ENCODE measurements at regions of chr18 and their contacts with region 1.

Region 1: GRCh38 chr18:24103320-24104021 is 35.4 kb upstream of the CABYR start:
- DNase-seq: no peak
- H3K4me3 ChIP-seq: no peak overlapping the region
- H3K27ac ChIP-seq: no peak overlapping the region
- H3K4me1 ChIP-seq: no peaks in the 10 kb centered on the region
- H3K27me3 ChIP-seq: no peaks in the 10 kb centered on the region
- CTCF ChIP-seq: no peak

Region 2: GRCh38 chr18:24031916-24032315 is 71.6 kb before region 1 on chr18:
- intact Hi-C with region 1: loop called (anchors 10 kb)
- DNase-seq: no peak
- H3K4me3 ChIP-seq: no peak overlapping the region
- H3K27ac ChIP-seq: no peak overlapping the region
- H3K4me1 ChIP-seq: no peaks in the 10 kb centered on the region
- H3K27me3 ChIP-seq: no peaks in the 10 kb centered on the region
- CTCF ChIP-seq: no peak

Region 3: DNA sequence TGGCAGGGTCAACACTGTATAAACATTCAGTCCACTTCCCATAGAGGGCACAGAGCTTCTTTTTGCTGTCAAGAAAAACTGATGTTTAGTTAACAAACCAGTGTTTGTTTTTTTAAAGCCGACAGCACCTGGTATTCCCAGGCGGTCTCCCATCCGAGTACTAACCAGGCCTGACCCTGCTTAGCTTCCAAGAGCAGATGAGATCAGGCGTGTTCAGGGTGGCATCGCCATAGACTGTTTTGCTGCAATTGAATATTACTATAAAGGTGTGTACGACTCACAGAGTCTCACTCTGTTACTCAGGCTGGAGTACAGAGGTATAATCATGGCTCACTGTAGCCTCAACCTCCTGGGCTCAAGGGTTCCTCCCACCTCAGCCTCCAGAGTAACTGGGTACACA is 66.9 kb after region 1 on chr18:
- intact Hi-C with region 1: no loop called
- DNase-seq: no peak
- H3K4me3 ChIP-seq: no peak overlapping the region
- H3K27ac ChIP-seq: no peak overlapping the region
- H3K4me1 ChIP-seq: no peaks in the 10 kb centered on the region
- H3K27me3 ChIP-seq: no peaks in the 10 kb centered on the region
- CTCF ChIP-seq: no peak